ENCODE measurements at regions of chr10 and their contacts with region 1.

Region 1: GRCh38 chr10:15106352-15107013 is 9.3 kb downstream of the RPP38 start:
- DNase-seq: peak; percentile 55 to 70
- H3K4me3 ChIP-seq: no peak overlapping the region
- H3K27ac ChIP-seq: no peak overlapping the region
- H3K4me1 ChIP-seq: no peaks in the 10 kb centered on the region
- H3K27me3 ChIP-seq: no peaks in the 10 kb centered on the region
- CTCF ChIP-seq: peak; percentile 94

Region 2: GRCh38 chr10:14459665-14460064 is 646.8 kb before region 1 on chr10:
- CTCF ChIA-PET with region 1: no interaction called
- POLR2A ChIA-PET with region 1: no interaction called
- intact Hi-C with region 1: no loop called
- DNase-seq: no peak
- H3K4me3 ChIP-seq: no peak overlapping the region
- H3K27ac ChIP-seq: no peak overlapping the region
- H3K4me1 ChIP-seq: no peaks in the 10 kb centered on the region
- H3K27me3 ChIP-seq: peaks cover 3% of the 10 kb centered on the region; the same call in 1 of the 2 replicates
- CTCF ChIP-seq: no peak

Region 3: DNA sequence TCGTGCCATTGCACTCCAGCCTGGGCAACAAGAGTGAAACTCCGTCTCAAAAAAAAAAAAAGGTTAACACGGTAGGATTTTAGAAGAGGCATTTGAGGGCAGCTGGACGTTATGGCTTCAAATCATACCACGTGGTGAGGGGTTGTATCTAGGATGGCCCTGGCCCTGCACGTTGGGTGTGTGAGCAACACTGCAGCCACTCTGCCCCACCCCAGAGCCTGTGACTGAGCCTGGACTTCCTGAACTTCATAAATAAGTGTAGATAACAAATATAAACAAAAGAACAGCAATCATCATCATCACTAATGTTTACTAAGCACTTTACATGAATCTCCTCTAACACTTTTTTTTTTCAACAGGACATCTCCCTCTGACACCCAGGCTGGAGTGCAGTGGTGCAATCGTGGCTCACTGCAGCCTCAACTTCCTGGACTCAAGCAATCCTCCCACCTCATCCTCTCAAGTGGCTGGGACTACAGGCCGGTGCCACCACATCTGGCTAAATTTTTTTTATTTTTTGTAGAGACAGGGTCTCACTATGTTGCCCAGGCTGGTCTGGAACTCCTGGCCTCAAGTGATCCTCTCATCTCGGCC is 606.2 kb before region 1 on chr10:
- CTCF ChIA-PET with region 1: no interaction called
- POLR2A ChIA-PET with region 1: no interaction called
- intact Hi-C with region 1: loop called (anchors 1 kb)
- DNase-seq: peak in 1 of 2 experiments; percentile 46
- H3K4me3 ChIP-seq: no peak overlapping the region
- H3K27ac ChIP-seq: no peak overlapping the region
- H3K4me1 ChIP-seq: no peaks in the 10 kb centered on the region
- H3K27me3 ChIP-seq: no peaks in the 10 kb centered on the region
- CTCF ChIP-seq: no peak

Region 4: DNA sequence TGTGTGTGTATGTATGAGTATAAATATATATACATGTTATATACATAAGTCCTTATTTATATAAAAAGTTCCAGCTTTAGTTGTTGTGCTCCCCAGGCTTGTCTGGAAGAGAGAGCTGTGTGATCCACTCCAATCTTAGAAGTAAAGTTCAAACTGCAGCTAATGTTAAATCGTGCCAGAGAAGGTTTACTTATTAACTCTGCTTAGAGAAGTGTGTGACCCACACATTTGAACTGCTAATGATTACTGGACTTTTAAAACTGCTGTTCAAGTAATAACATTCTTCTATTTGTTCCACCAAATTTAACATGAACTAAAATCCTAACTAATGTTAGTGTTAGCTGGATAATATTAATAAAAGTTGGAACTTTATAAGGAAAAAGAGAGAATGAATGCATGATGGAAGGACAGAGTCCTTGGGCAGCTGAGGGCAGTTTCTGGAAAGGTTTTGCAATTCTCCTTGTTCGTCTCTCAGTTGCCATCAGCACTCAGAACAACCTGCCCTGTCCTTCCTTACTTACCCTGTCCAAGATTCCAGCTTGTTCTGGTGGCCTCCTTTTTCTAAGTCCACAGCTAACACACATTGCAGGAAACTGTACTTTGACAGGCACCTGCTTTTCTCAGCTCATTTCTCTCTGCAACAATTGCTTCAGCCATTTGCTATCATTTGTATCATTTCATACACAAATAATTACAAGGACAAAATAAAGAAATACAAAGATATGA is 494.4 kb before region 1 on chr10:
- CTCF ChIA-PET with region 1: no interaction called
- POLR2A ChIA-PET with region 1: interaction called, 10 read pairs
- intact Hi-C with region 1: no loop called
- DNase-seq: no peak
- H3K4me3 ChIP-seq: no peak overlapping the region
- H3K27ac ChIP-seq: no peak overlapping the region
- H3K4me1 ChIP-seq: peaks cover 3% of the 10 kb centered on the region
- H3K27me3 ChIP-seq: no peaks in the 10 kb centered on the region
- CTCF ChIP-seq: no peak

Region 5: GRCh38 chr10:14945091-14945490 is 161.4 kb before region 1 on chr10:
- CTCF ChIA-PET with region 1: no interaction called
- POLR2A ChIA-PET with region 1: no interaction called
- intact Hi-C with region 1: no loop called
- DNase-seq: peak in 1 of 2 experiments; percentile 48
- H3K4me3 ChIP-seq: no peak overlapping the region
- H3K27ac ChIP-seq: peak overlapping the region; percentile 53; the same call in 1 of the 2 replicates
- H3K4me1 ChIP-seq: no peaks in the 10 kb centered on the region
- H3K27me3 ChIP-seq: no peaks in the 10 kb centered on the region
- CTCF ChIP-seq: no peak

Region 6: DNA sequence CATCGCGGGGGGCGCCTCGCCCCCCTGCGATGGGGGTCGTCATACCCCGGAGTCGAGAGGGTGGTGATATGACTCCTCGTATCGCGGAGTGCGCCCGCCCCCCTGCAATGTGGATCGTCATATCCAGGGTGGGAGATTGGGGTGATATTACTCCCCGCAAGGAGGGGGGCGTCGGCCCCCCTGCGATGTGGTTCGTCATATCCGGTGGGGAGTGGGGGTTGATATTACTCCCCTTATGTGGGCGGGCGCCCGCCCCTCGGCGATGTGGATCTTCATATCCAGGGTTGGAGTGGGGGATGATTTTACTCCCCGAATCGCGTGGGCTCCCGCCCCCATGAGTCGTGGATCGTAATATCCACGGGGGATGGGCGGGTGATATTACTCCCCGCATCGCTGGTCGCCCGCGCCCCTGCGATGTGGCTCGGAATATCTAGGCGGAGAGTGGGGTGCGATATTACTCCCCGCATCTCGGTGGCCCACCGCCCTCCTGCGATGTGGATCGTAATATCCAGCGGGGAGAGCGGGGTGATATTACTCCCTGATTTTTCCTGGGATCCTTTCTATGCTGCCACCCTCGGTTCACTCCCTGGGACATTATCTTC is 110.4 kb before region 1 on chr10:
- CTCF ChIA-PET with region 1: interaction called, 4 read pairs
- POLR2A ChIA-PET with region 1: no interaction called
- intact Hi-C with region 1: loop called (anchors 1 kb)
- DNase-seq: no peak
- H3K4me3 ChIP-seq: no peak overlapping the region
- H3K27ac ChIP-seq: no peak overlapping the region
- H3K4me1 ChIP-seq: peaks cover 9% of the 10 kb centered on the region
- H3K27me3 ChIP-seq: no peaks in the 10 kb centered on the region
- CTCF ChIP-seq: no peak